Activated CD8-positive, alpha-beta T cell treated with anti-CD3 and anti-CD28 coated beads, Interleukin-2, amount 10 ng/mL, durations not matched to agents 7 days and 5 days (primary cell): ENCODE measurements at regions of chr2 and their contacts with region 1.

Region 1: GRCh38 chr2:233251306-233252116 is at the start of gene ATG16L1:
- DNase-seq: peak; percentile 97
- ATAC-seq: peak; percentile 97
- H3K4me3 Mint-ChIP-seq: peak within 1 kb of the TSS; percentile 91
- H3K27ac Mint-ChIP-seq: peak within 1 kb of the TSS; percentile 94
- H3K4me1 Mint-ChIP-seq: peaks cover 67% of the 10 kb centered on the region
- H3K27me3 Mint-ChIP-seq: no peaks in the 10 kb centered on the region
- total RNA-seq, gene ATG16L1: 47.2 to 50.5 TPM

Region 2: DNA sequence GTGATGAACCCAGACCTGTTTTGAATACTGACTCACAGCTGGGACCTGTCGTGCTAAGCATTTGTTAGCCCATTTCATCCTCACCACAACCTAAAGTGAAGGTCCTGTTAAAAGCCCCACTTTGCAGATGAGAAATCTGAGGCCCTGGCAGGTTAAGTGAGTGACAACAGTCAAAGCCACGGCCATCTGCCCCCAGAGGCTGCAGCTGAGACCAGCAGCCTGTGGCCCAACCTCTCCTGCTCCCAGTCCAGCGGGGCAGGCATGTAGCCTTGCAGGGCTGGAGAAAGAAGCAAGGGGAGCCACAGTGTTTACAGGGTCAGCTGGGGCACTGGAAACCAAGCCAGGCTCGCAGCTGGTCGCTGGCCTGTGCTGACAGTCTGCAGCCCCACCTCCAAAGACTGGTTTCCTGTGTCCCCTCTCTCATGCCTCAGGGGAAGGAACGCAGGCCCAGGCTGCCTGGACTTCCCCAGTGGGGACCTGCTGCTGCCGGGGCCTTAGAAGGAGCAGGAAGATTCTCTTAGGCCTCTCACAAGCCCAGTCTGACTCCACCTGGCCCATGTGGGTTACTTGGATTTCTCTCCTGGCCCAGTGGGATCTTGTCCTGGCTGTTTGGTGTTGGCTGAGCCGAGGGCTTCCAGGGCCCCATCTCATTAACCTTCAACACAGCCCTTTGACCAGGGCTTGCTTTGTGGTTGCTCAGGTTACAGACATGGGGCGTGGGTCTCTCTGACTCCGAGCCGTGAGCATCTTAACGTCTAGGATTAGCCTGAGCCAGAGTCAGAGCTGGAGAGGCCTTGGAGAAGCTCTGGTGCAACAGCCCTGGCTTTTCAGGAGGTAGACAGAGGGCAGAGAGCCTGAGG is 189.7 kb before region 1 on chr2:
- CTCF ChIA-PET with region 1: interaction called, 20 read pairs
- POLR2A ChIA-PET with region 1: interaction called, 12 read pairs
- DNase-seq: peak; percentile 56
- ATAC-seq: peak; percentile 29
- H3K4me3 Mint-ChIP-seq: peak overlapping the region; percentile 98
- H3K27ac Mint-ChIP-seq: peak overlapping the region; percentile 91
- H3K4me1 Mint-ChIP-seq: peaks cover 54% of the 10 kb centered on the region
- H3K27me3 Mint-ChIP-seq: no peaks in the 10 kb centered on the region

Region 3: GRCh38 chr2:233075966-233076339 is 175.6 kb before region 1 on chr2:
- CTCF ChIA-PET with region 1: interaction called, 10 read pairs
- POLR2A ChIA-PET with region 1: no interaction called
- DNase-seq: peak; percentile 61
- ATAC-seq: peak; percentile 69
- H3K4me3 Mint-ChIP-seq: no peak overlapping the region
- H3K27ac Mint-ChIP-seq: no peak overlapping the region
- H3K4me1 Mint-ChIP-seq: peaks cover 44% of the 10 kb centered on the region
- H3K27me3 Mint-ChIP-seq: no peaks in the 10 kb centered on the region

Region 4: DNA sequence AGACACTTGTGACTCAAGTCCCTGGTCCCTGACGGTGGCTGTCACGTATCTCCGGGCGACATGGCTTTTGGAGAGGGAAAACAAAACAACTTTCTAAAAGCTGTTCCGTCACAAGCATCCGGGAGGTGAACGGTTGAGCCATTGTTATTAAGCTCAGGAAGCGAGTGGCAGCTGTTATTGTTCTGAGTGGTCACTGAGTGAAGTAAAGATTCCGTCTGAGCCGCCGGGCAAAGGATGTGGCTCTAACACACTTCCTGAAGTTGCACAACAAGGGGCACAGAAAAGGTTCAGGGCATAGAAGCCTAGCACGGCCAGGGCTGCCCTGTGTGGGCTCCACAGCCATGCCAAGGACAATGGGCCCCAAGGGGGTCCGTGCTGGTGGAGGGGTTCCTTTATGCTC is 167.0 kb before region 1 on chr2:
- CTCF ChIA-PET with region 1: interaction called, 12 read pairs
- POLR2A ChIA-PET with region 1: no interaction called
- DNase-seq: peak; percentile 73
- ATAC-seq: peak; percentile 24
- H3K4me3 Mint-ChIP-seq: peak overlapping the region; percentile 71
- H3K27ac Mint-ChIP-seq: peak overlapping the region; percentile 93
- H3K4me1 Mint-ChIP-seq: peaks cover 84% of the 10 kb centered on the region
- H3K27me3 Mint-ChIP-seq: no peaks in the 10 kb centered on the region

Region 5: DNA sequence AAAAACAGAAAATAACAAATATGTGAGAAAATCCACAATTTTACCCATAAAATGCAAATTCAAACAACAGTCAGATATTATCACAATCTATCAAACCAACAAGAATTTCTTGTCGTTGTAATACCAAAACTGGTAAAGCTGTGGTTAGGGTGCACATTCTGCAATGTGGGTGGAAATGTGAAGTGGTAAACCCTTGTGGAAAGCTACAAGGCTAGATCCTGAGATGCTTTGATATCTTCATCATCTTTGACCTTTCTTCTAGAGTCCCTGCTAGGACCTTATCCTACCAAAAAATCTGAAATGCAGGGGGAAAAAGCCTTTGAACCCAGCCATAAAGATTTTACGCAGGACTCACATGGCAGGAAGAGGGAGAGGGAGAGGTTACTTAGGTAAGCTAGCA is 17.2 kb before region 1 on chr2:
- CTCF ChIA-PET with region 1: interaction called, 52 read pairs
- POLR2A ChIA-PET with region 1: interaction called, 11 read pairs
- DNase-seq: peak; percentile 66
- ATAC-seq: peak; percentile 76
- H3K4me3 Mint-ChIP-seq: peak overlapping the region; percentile 57
- H3K27ac Mint-ChIP-seq: peak overlapping the region; percentile 88
- H3K4me1 Mint-ChIP-seq: peaks cover 78% of the 10 kb centered on the region
- H3K27me3 Mint-ChIP-seq: no peaks in the 10 kb centered on the region

Region 6: GRCh38 chr2:233261819-233262555 is 10.5 kb after region 1 on chr2:
- CTCF ChIA-PET with region 1: interaction called, 42 read pairs
- POLR2A ChIA-PET with region 1: interaction called, 44 read pairs
- DNase-seq: no peak
- ATAC-seq: no peak
- H3K4me3 Mint-ChIP-seq: no peak overlapping the region
- H3K27ac Mint-ChIP-seq: peak overlapping the region; percentile 82
- H3K4me1 Mint-ChIP-seq: peaks cover 64% of the 10 kb centered on the region
- H3K27me3 Mint-ChIP-seq: no peaks in the 10 kb centered on the region

Region 7: GRCh38 chr2:233267516-233268245 is 16.2 kb after region 1 on chr2:
- CTCF ChIA-PET with region 1: interaction called, 42 read pairs
- POLR2A ChIA-PET with region 1: interaction called, 44 read pairs
- DNase-seq: peak; percentile 95
- ATAC-seq: peak; percentile 97
- H3K4me3 Mint-ChIP-seq: peak overlapping the region; percentile 65
- H3K27ac Mint-ChIP-seq: peak overlapping the region; percentile 92
- H3K4me1 Mint-ChIP-seq: peaks cover 70% of the 10 kb centered on the region
- H3K27me3 Mint-ChIP-seq: no peaks in the 10 kb centered on the region

Region 8: GRCh38 chr2:233338046-233338445 is 86.5 kb after region 1 on chr2:
- CTCF ChIA-PET with region 1: no interaction called
- POLR2A ChIA-PET with region 1: no interaction called
- DNase-seq: no peak
- ATAC-seq: no peak
- H3K4me3 Mint-ChIP-seq: no peak overlapping the region
- H3K27ac Mint-ChIP-seq: no peak overlapping the region
- H3K4me1 Mint-ChIP-seq: peaks cover 44% of the 10 kb centered on the region
- H3K27me3 Mint-ChIP-seq: peaks cover 10% of the 10 kb centered on the region